B cell (primary cell): ENCODE measurements at regions of chr12 and their contacts with region 1.

Region 1: DNA sequence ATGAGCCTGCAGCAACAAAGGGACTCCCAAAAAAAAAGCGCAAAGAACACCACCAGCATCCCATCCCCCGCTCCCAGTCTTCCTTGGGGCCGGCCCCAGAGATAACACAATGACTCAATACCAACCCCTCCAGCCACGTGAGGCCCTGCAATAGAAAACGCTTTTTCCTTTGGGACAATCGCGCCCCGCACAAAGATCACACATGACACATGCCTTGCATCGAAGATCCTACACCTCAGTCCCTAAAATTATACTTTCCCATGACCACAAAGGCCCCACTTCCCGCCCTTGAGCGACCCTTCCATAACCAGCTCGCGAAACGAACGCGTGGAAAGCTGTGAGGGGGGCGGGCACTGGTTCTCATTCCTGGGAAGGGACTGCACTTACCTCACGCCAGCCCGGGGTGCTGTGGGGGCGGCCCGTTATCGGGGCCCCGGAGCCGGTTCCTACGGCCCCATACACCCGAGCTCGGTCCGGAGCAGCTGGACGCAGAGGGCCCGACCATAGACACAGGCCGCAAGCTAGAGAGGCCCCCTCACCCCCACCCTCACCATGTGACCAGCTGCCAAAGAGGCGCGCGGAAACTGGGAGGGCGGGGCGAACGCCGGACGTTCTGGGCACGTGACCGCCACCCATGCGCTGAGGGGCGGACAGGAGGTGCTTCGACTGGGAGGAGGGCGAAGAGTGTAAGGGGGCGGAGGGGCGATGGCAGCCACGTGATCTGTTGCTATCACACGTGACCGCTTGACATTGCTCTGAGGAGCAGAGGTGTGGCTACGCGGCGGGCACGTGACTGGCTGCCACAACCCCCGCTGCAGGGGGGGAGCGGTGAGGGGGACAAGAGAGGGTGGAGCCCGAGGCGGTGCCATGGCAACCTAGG is at the start of gene CDK4:
- DNase-seq: peak; percentile 100
- ATAC-seq: peak; percentile 78
- H3K4me3 ChIP-seq: peak within 1 kb of the TSS; percentile 51 to 84 (median 78)
- H3K4me3 Mint-ChIP-seq: peak within 1 kb of the TSS; percentile 91
- H3K27ac ChIP-seq: peak within 1 kb of the TSS; percentile 74 to 98
- H3K27ac Mint-ChIP-seq: peak within 1 kb of the TSS; percentile 95
- H3K4me1 ChIP-seq: peaks cover 39 to 50% of the 10 kb centered on the region in 2 donors
- H3K4me1 Mint-ChIP-seq: peaks cover 55% of the 10 kb centered on the region
- H3K27me3 ChIP-seq: no peaks in the 10 kb centered on the region
- H3K27me3 Mint-ChIP-seq: no peaks in the 10 kb centered on the region
- CTCF ChIP-seq: no peak
- total RNA-seq, gene CDK4: 43.1 and 44.6 TPM in 2 replicates

Region 2: GRCh38 chr12:57088459-57089248 is 663.4 kb before region 1 on chr12 and contains the start of gene NAB2:
- CTCF ChIA-PET with region 1: no interaction called
- POLR2A ChIA-PET with region 1: no interaction called
- intact Hi-C with region 1: loop called (anchors 10 kb)
- DNase-seq: peak; percentile 96
- ATAC-seq: peak; percentile 62
- H3K4me3 ChIP-seq: peak within 1 kb of the TSS; percentile 75 to 100 (median 80)
- H3K4me3 Mint-ChIP-seq: peak within 1 kb of the TSS; percentile 92
- H3K27ac ChIP-seq: peak within 1 kb of the TSS; percentile 98 to 99
- H3K27ac Mint-ChIP-seq: peak within 1 kb of the TSS; percentile 91
- H3K4me1 ChIP-seq: peaks cover 18 to 40% of the 10 kb centered on the region in 2 donors
- H3K4me1 Mint-ChIP-seq: peaks cover 55% of the 10 kb centered on the region
- H3K27me3 ChIP-seq: no peaks in the 10 kb centered on the region
- H3K27me3 Mint-ChIP-seq: no peaks in the 10 kb centered on the region
- CTCF ChIP-seq: no peak
- total RNA-seq, gene NAB2: 49.0 and 52.1 TPM in 2 replicates

Region 3: GRCh38 chr12:57487597-57488401 is 264.2 kb before region 1 on chr12 and contains the start of gene MARS1:
- CTCF ChIA-PET with region 1: no interaction called
- POLR2A ChIA-PET with region 1: no interaction called
- intact Hi-C with region 1: loop called (anchors 10 kb)
- DNase-seq: peak; percentile 96
- ATAC-seq: peak; percentile 98
- H3K4me3 ChIP-seq: peak within 1 kb of the TSS; percentile 66 to 95 (median 86)
- H3K4me3 Mint-ChIP-seq: peak within 1 kb of the TSS; percentile 89
- H3K27ac ChIP-seq: peak within 1 kb of the TSS; percentile 42 to 86
- H3K27ac Mint-ChIP-seq: peak within 1 kb of the TSS; percentile 93
- H3K4me1 ChIP-seq: peaks cover 20 to 25% of the 10 kb centered on the region in 2 donors
- H3K4me1 Mint-ChIP-seq: peaks cover 31% of the 10 kb centered on the region
- H3K27me3 ChIP-seq: no peaks in the 10 kb centered on the region
- H3K27me3 Mint-ChIP-seq: no peaks in the 10 kb centered on the region
- CTCF ChIP-seq: no peak
- total RNA-seq, gene MARS1: 183 and 193 TPM in 2 replicates

Region 4: GRCh38 chr12:57576613-57577160 is 175.3 kb before region 1 on chr12:
- CTCF ChIA-PET with region 1: no interaction called
- POLR2A ChIA-PET with region 1: no interaction called
- intact Hi-C with region 1: no loop called
- DNase-seq: no peak
- ATAC-seq: no peak
- H3K4me3 ChIP-seq: no peak overlapping the region
- H3K4me3 Mint-ChIP-seq: no peak overlapping the region
- H3K27ac ChIP-seq: no peak overlapping the region
- H3K27ac Mint-ChIP-seq: no peak overlapping the region
- H3K4me1 ChIP-seq: no peaks in the 10 kb centered on the region
- H3K4me1 Mint-ChIP-seq: no peaks in the 10 kb centered on the region
- H3K27me3 ChIP-seq: peaks cover 0 to 9% (median 0%) of the 10 kb centered on the region in 4 experiments
- H3K27me3 Mint-ChIP-seq: peaks cover 7% of the 10 kb centered on the region
- CTCF ChIP-seq: no peak

Region 5: GRCh38 chr12:57693659-57694458 is 58.2 kb before region 1 on chr12 and contains the start of gene OS9:
- CTCF ChIA-PET with region 1: no interaction called
- POLR2A ChIA-PET with region 1: interaction called, 5 read pairs
- intact Hi-C with region 1: loop called (anchors 2 kb)
- DNase-seq: peak; percentile 99
- ATAC-seq: peak; percentile 92
- H3K4me3 ChIP-seq: peak within 1 kb of the TSS; percentile 80 to 93 (median 89)
- H3K4me3 Mint-ChIP-seq: no peak within 1 kb of the TSS
- H3K27ac ChIP-seq: peak within 1 kb of the TSS; percentile 62 to 78
- H3K27ac Mint-ChIP-seq: no peak within 1 kb of the TSS
- H3K4me1 ChIP-seq: peaks cover 13 to 17% of the 10 kb centered on the region in 2 donors
- H3K4me1 Mint-ChIP-seq: peaks cover 13% of the 10 kb centered on the region
- H3K27me3 ChIP-seq: no peaks in the 10 kb centered on the region
- H3K27me3 Mint-ChIP-seq: peaks cover 13% of the 10 kb centered on the region
- CTCF ChIP-seq: peak; percentile 82
- total RNA-seq, gene OS9: 182 and 200 TPM in 2 replicates

Region 6: GRCh38 chr12:57729321-57729844 is 22.6 kb before region 1 on chr12:
- CTCF ChIA-PET with region 1: no interaction called
- POLR2A ChIA-PET with region 1: no interaction called
- intact Hi-C with region 1: no loop called
- DNase-seq: no peak
- ATAC-seq: no peak
- H3K4me3 ChIP-seq: no peak overlapping the region
- H3K4me3 Mint-ChIP-seq: no peak overlapping the region
- H3K27ac ChIP-seq: no peak overlapping the region
- H3K27ac Mint-ChIP-seq: peak overlapping the region; percentile 21
- H3K4me1 ChIP-seq: peaks cover 8 to 16% of the 10 kb centered on the region in 2 donors
- H3K4me1 Mint-ChIP-seq: peaks cover 10% of the 10 kb centered on the region
- H3K27me3 ChIP-seq: no peaks in the 10 kb centered on the region
- H3K27me3 Mint-ChIP-seq: no peaks in the 10 kb centered on the region
- CTCF ChIP-seq: no peak

Region 7: DNA sequence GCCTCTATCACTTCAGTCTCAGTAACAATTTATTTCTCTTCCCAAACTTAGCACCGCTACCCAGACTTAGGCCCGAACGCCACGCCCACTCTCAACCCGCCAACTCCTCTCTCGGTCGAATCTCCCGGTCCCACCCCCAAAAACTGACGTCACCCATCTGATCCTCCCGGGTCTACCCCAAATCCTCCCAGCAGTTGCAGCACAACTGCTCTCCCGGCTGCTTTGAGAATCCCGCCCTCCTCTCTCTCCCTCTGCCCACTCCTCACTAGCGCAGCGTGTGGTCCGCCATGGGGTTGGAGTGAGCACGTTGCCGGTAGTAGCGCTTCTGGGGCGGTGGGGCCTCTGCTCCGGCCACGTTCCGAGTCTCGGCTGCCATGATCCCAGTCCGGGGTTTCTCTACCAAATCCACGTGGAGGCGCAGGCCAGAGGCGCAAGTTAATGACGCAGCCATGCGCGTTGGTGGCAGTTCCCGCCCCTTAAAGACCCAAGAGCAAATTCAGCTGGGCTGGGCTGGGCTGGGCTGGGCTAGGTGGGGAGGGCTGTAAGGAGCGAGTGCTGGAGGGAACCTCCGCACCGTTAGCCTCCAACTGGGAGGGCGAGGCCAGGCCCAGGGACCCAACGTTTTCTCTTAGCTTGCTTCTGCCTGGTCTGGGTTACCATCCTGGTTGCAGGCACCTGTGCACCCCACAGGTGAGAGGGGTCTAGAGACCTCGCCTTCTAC is 19.8 kb after region 1 on chr12 and contains the start of gene METTL1:
- CTCF ChIA-PET with region 1: interaction called, 37 read pairs
- POLR2A ChIA-PET with region 1: interaction called, 3 read pairs
- intact Hi-C with region 1: loop called (anchors 1 kb)
- DNase-seq: peak; percentile 94
- ATAC-seq: peak; percentile 91
- H3K4me3 ChIP-seq: peak within 1 kb of the TSS; percentile 70 to 96 (median 91)
- H3K4me3 Mint-ChIP-seq: peak within 1 kb of the TSS; percentile 96
- H3K27ac ChIP-seq: peak within 1 kb of the TSS; percentile 59 to 81
- H3K27ac Mint-ChIP-seq: peak within 1 kb of the TSS; percentile 91
- H3K4me1 ChIP-seq: peaks cover 15 to 24% of the 10 kb centered on the region in 2 donors
- H3K4me1 Mint-ChIP-seq: peaks cover 16% of the 10 kb centered on the region
- H3K27me3 ChIP-seq: peaks cover 0 to 9% (median 7%) of the 10 kb centered on the region in 4 experiments
- H3K27me3 Mint-ChIP-seq: no peaks in the 10 kb centered on the region
- CTCF ChIP-seq: no peak
- total RNA-seq, gene METTL1: 8.5 and 9.2 TPM in 2 replicates

Region 8: DNA sequence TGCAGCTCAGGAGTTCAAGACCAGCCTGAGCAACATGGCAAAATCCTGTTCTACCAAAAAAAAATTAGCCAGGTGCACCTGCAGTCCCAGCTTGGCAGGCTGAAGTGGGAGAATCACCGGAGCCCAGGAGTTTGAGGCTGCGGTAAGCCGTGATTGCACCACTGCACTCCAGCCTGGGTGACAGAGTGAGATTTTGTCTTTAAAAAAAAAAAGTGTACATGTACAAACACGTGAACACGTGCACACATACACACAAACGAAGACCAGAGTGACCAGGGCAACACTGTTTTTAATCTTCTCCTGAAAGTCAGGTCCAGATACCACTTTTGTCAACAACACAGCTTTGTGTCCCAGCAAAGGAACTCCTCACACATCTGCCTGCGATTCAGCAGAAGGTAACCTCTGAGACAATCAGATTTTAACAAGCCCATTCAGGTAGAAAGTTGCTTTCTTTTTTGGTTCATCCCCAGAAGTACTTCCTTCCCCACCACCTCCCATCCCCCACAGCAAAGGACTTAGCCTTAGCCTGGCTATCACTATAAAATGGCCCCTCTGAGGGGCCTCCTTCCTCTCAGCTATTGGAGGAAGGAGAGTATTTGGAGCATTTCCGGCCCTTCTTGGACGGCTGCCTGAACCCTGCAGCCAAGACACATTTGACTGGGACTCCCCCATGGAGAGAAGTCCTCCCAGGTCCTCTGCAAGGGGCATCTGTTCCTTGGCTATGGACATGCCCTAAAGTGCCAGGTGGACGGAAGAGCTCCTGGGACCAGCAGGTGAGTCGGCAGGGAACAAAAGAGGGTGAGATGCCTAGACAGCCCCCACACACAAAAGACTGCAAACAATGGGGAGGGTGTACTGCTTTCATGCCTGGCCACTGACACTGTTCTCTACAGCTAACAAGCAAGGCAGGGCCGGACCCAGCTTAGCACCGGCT is 84.7 kb after region 1 on chr12:
- CTCF ChIA-PET with region 1: interaction called, 7 read pairs
- POLR2A ChIA-PET with region 1: interaction called, 3 read pairs
- intact Hi-C with region 1: loop called (anchors 5 kb)
- DNase-seq: peak; percentile 63
- ATAC-seq: peak; percentile 29
- H3K4me3 ChIP-seq: peak overlapping the region in 4 of 5 experiments; percentile 3 to 38 (median 12)
- H3K4me3 Mint-ChIP-seq: peak overlapping the region; percentile 79
- H3K27ac ChIP-seq: peak overlapping the region; percentile 62 to 81
- H3K27ac Mint-ChIP-seq: peak overlapping the region; percentile 87
- H3K4me1 ChIP-seq: peaks cover 94 to 99% of the 10 kb centered on the region in 2 donors
- H3K4me1 Mint-ChIP-seq: peaks cover 93% of the 10 kb centered on the region
- H3K27me3 ChIP-seq: no peaks in the 10 kb centered on the region
- H3K27me3 Mint-ChIP-seq: no peaks in the 10 kb centered on the region
- CTCF ChIP-seq: no peak

Region 9: DNA sequence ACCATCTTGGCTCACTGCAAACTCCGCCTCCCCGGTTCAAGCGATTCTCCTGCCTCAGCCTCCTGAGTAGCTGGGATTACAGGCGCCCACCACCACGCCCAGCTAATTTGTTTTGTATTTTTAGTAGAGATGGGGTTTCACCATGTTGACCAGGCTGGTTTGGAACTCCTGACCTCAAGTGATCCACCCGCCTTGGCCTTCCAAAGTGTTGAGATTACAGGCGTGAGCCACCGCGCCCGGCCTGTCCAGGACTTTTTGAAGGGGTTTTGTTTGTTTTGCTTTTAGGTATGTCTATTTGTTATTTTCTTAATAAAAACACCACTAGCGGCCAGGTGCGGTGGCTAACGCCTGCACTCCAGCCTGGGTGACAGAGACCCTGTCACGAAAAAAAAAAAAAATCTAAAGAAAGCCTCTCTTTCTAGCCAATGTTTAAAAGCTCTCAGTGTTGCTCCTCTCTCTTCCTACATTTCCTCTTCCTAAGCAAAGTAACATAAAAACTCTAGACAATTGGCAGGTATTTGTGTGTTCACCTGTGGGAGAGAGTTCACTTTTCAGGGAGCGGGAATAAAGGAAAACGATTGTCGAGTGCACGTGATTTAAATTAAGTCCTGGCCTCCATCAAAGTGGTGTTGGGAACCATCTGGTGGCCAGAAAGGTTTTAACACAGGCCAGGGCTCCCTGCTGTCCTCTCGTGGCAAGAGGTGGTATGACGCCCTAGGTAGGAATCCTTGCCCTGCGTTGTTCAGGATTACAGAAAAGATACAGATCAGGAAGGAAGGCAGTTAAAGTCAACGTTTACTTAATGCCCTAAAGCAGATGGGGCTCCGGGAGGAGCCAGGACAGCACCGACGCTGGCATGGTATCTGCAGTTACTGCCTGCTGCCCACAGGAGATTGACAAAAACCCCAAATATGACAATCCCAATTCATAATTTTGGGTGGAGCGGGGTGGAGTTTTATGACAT is 153.1 kb after region 1 on chr12:
- CTCF ChIA-PET with region 1: interaction called, 30 read pairs
- POLR2A ChIA-PET with region 1: no interaction called
- intact Hi-C with region 1: loop called (anchors 1 kb)
- DNase-seq: peak; percentile 90
- ATAC-seq: peak; percentile 100
- H3K4me3 ChIP-seq: peak overlapping the region in 3 of 5 experiments; percentile 18 to 32 (median 29)
- H3K4me3 Mint-ChIP-seq: peak overlapping the region; percentile 68
- H3K27ac ChIP-seq: no peak overlapping the region
- H3K27ac Mint-ChIP-seq: peak overlapping the region; percentile 50
- H3K4me1 ChIP-seq: peaks cover 3 to 6% of the 10 kb centered on the region in 2 donors
- H3K4me1 Mint-ChIP-seq: peaks cover 8% of the 10 kb centered on the region
- H3K27me3 ChIP-seq: peaks cover 0 to 9% (median 4%) of the 10 kb centered on the region in 4 experiments
- H3K27me3 Mint-ChIP-seq: peaks cover 22% of the 10 kb centered on the region
- CTCF ChIP-seq: peak; percentile 100